Activated CD8-positive, alpha-beta T cell treated with anti-CD3 and anti-CD28 coated beads, Interleukin-2, amount 10 ng/mL, durations not matched to agents 7 days and 5 days (primary cell): ENCODE measurements at regions of chr19 and their contacts with region 1.

Region 1: DNA sequence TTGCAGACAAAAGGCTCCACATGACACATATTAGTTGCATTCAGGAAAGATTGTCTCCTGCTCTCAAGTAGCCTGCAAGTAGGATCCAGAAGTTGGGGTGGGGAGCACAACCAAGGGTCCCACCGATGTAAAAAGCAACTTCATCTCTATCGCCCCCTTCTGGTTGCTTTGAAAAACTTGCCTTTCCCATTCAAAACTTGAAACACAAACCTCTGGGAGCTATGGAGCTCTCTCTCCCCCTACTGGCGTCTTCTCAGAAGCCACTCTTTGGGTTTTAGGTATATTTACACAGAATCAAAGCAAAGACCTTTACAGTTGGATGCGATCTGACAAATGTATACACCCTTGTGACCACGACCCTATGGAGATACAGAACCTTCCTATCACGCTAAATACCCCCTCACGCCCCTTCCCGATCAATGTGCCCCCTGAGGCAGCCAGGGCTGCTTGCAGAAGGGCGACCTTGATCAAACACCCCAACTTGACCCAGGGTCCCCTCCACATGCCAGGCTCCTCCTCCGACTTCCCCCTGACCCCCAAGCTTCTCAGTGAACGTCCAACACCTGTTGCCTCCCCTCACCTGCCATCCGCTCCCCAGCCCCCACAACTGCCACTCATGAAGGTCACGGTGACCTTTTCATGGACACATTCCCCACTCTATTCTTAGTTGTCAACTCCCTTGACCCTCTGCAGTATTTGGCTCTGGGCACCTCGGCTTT is 10.1 kb downstream of the NOSIP start:
- DNase-seq: peak; percentile 88
- ATAC-seq: peak; percentile 16
- H3K4me3 Mint-ChIP-seq: peak overlapping the region; percentile 7
- H3K27ac Mint-ChIP-seq: peak overlapping the region; percentile 66
- H3K4me1 Mint-ChIP-seq: peaks cover 65% of the 10 kb centered on the region
- H3K27me3 Mint-ChIP-seq: no peaks in the 10 kb centered on the region

Region 2: DNA sequence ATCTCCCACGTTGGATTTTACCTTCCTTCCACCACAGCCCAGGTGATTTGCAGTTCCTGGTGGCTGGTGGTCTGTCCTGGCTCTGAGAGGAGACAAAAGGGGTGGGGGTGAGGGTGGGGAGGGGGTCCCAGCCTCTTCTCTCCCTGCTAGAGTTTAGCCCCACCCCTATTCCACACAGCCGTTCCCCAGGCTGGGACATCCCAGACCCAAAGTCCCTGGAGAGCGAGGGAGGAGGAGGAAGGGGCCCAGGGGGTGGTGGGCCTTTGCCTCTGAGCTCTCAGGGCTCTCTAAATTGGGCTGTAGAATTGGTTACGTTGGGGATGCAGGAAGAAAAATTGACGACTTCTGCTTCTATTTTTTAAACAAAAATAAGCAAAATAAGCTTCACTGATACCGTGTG is 327.2 kb before region 1 on chr19:
- CTCF ChIA-PET with region 1: no interaction called
- POLR2A ChIA-PET with region 1: no interaction called
- DNase-seq: no peak
- ATAC-seq: no peak
- H3K4me3 Mint-ChIP-seq: no peak overlapping the region
- H3K27ac Mint-ChIP-seq: no peak overlapping the region
- H3K4me1 Mint-ChIP-seq: no peaks in the 10 kb centered on the region
- H3K27me3 Mint-ChIP-seq: peaks cover 5% of the 10 kb centered on the region

Region 3: GRCh38 chr19:49512970-49513745 is 57.1 kb before region 1 on chr19:
- CTCF ChIA-PET with region 1: interaction called, 16 read pairs
- POLR2A ChIA-PET with region 1: no interaction called
- DNase-seq: no peak
- ATAC-seq: peak; percentile 78
- H3K4me3 Mint-ChIP-seq: peak overlapping the region; percentile 74
- H3K27ac Mint-ChIP-seq: peak overlapping the region; percentile 69
- H3K4me1 Mint-ChIP-seq: peaks cover 28% of the 10 kb centered on the region
- H3K27me3 Mint-ChIP-seq: peaks cover 1% of the 10 kb centered on the region

Region 4: DNA sequence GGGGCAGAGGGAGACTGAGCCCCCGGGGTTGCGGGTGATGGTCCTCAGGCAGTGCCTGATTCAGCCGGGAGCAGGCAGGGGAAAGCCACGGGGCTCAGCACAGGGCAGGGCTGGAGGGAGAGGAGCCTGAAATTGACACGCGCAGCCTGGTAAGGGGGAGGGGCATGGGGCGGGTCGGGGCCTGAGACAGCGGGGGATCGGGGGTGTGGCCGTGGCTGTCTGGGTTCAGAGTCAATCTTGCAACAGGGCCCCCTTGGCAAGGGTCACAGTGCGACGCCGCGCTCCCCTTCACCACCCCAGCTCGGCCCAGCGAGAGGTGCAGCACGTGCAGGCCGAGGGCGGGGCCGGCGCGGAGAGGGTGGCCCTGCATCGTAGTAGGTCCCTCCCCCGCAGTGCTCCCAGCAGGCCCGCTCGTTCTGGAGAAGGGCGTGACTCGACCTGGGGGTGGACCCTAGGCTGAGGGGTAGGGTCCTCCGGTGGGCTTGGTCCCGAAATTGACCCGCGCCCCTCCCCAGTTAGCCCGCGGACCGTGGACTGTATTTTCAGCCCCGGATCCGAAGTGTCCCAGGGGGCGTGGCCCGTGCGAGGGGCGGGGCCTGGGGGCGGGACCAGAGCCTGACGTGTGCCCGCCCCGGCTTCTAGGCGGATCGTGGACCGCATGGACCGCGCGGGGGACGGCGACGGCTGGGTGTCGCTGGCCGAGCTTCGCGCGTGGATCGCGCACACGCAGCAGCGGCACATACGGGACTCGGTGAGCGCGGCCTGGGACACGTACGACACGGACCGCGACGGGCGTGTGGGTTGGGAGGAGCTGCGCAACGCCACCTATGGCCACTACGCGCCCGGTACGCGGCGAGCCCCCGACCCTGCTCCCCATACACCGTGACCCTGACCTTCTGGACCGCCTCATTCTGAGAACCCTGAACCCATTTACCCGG is 36.5 kb before region 1 on chr19:
- CTCF ChIA-PET with region 1: interaction called, 32 read pairs
- POLR2A ChIA-PET with region 1: no interaction called
- DNase-seq: peak; percentile 84
- ATAC-seq: peak; percentile 95
- H3K4me3 Mint-ChIP-seq: peak overlapping the region; percentile 71
- H3K27ac Mint-ChIP-seq: peak overlapping the region; percentile 77
- H3K4me1 Mint-ChIP-seq: peaks cover 30% of the 10 kb centered on the region
- H3K27me3 Mint-ChIP-seq: peaks cover 10% of the 10 kb centered on the region

Region 5: DNA sequence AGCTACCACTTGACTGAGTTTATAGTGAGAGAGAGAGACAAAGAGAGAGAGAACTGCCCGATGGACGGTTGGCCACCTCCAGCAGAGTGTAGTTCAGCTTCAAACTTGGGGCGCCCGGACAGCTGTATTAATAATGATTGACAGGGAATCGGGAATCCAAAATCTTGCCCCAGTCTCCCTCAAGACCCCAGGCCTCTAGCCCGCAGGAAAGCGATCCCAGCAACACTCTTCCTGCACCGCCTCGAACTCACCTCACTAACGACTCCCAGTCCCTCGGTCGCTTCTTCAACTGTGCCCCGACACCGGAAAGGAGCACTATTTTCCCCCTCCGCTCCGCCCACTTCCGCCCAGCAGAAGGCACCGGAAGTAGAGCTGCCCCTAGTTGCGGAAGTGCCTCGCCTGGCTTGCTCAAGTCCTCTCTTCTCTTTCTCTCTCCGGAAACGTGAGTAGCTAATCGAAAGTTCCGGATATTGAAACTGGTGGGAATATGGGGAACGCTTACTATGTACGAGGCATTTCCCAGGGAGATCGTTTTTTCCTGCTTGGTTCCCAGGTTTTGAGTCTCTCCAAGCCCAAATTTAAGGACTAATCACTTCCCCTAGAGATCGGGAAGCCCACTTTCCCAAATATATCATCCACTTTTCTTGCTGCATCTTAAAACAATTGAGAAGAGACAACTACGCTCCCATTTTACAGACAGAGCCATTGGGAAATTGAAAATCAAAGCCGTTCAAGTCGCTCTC is 10.1 kb after region 1 on chr19 and contains the start of gene NOSIP:
- CTCF ChIA-PET with region 1: interaction called, 43 read pairs
- POLR2A ChIA-PET with region 1: interaction called, 3 read pairs
- DNase-seq: peak; percentile 98
- ATAC-seq: peak; percentile 97
- H3K4me3 Mint-ChIP-seq: peak within 1 kb of the TSS; percentile 96
- H3K27ac Mint-ChIP-seq: peak within 1 kb of the TSS; percentile 91
- H3K4me1 Mint-ChIP-seq: peaks cover 33% of the 10 kb centered on the region
- H3K27me3 Mint-ChIP-seq: no peaks in the 10 kb centered on the region
- total RNA-seq, gene NOSIP: 147 to 159 TPM